Caco-2 (cell line): ENCODE measurements at regions of chr3 and their contacts with region 1.

Region 1: GRCh38 chr3:119184796-119185570 is 11.6 kb downstream of the UPK1B start:
- DNase-seq: peak; percentile 58 to 62
- H3K4me3 ChIP-seq: no peak overlapping the region
- H3K4me3 Mint-ChIP-seq: peak overlapping the region; percentile 14
- H3K27ac Mint-ChIP-seq: peak overlapping the region; percentile 49
- H3K4me1 ChIP-seq: peaks cover 65% of the 10 kb centered on the region
- H3K4me1 Mint-ChIP-seq: peaks cover 38% of the 10 kb centered on the region
- H3K27me3 ChIP-seq: no peaks in the 10 kb centered on the region
- H3K27me3 Mint-ChIP-seq: no peaks in the 10 kb centered on the region
- CTCF ChIP-seq: no peak

Region 2: DNA sequence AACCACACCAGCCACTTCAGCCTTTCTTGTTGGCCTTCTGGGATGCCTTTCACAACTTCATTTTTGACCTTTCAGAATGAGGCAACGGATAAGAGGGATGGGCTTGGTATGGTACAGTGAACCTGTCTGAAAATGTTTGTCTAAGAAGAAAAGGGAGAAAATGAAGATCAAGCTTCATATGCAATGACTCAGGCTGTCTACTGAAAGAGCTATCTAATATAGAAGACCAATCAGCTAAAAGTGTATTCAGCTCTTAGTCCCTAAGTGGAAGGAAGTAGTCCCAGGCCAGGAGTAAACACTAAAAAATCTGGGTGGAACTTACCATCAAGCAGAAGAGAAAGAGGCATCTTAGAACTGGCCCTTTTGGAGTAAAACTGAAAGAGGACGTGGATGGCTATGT is 23.7 kb before region 1 on chr3:
- CTCF ChIA-PET with region 1: no interaction called
- POLR2A ChIA-PET with region 1: no interaction called
- intact Hi-C with region 1: loop called (anchors 1 kb)
- DNase-seq: no peak
- H3K4me3 ChIP-seq: no peak overlapping the region
- H3K4me3 Mint-ChIP-seq: no peak overlapping the region
- H3K27ac Mint-ChIP-seq: no peak overlapping the region
- H3K4me1 ChIP-seq: peaks cover 15% of the 10 kb centered on the region
- H3K4me1 Mint-ChIP-seq: peaks cover 6% of the 10 kb centered on the region
- H3K27me3 ChIP-seq: no peaks in the 10 kb centered on the region
- H3K27me3 Mint-ChIP-seq: no peaks in the 10 kb centered on the region
- CTCF ChIP-seq: no peak